MCF 10A (cell line): ENCODE measurements at regions of chr2 and their contacts with region 1.

Region 1: GRCh38 chr2:196592912-196593881 is 46.3 kb upstream of the CCDC150 start:
- DNase-seq: peak; percentile 30
- H3K4me3 Mint-ChIP-seq: peak within 1 kb of the TSS; percentile 78
- H3K27ac Mint-ChIP-seq: no peak within 1 kb of the TSS
- H3K4me1 Mint-ChIP-seq: peaks cover 5% of the 10 kb centered on the region
- H3K27me3 Mint-ChIP-seq: no peaks in the 10 kb centered on the region
- CTCF ChIP-seq: no peak

Region 2: DNA sequence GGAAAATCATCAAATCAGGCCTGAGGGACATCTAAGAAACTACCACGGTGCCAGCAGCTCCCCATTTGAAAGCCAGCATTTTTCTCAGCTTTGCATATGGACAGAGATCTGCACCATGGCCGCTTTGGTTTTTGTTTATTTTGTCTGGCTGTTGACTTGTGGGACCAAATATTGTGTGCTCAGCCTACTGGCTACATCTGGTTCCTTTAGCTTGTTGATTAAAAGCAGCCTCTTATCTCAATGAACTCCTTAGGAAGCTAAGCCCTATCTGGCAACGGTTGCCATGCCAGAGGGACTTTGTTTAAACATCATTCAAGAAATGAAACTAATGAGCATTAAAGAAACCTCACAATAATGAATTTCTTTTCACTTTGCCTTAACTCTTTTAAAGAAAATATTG is 13.9 kb after region 1 on chr2:
- CTCF ChIA-PET with region 1: interaction called, 14 read pairs
- POLR2A ChIA-PET with region 1: no interaction called
- intact Hi-C with region 1: no loop called
- DNase-seq: no peak
- H3K4me3 Mint-ChIP-seq: no peak overlapping the region
- H3K27ac Mint-ChIP-seq: no peak overlapping the region
- H3K4me1 Mint-ChIP-seq: peaks cover 16% of the 10 kb centered on the region
- H3K27me3 Mint-ChIP-seq: no peaks in the 10 kb centered on the region
- CTCF ChIP-seq: no peak

Region 3: GRCh38 chr2:196639180-196640030 is 46.2 kb after region 1 on chr2 and contains the start of gene CCDC150:
- CTCF ChIA-PET with region 1: interaction called, 5 read pairs
- POLR2A ChIA-PET with region 1: interaction called, 4 read pairs
- intact Hi-C with region 1: loop called (anchors 2 kb)
- DNase-seq: peak; percentile 94
- H3K4me3 Mint-ChIP-seq: peak within 1 kb of the TSS; percentile 94
- H3K27ac Mint-ChIP-seq: peak within 1 kb of the TSS; percentile 71
- H3K4me1 Mint-ChIP-seq: peaks cover 16% of the 10 kb centered on the region
- H3K27me3 Mint-ChIP-seq: no peaks in the 10 kb centered on the region
- CTCF ChIP-seq: no peak
- total RNA-seq, gene CCDC150: 5.5 and 8.1 TPM in 2 replicates

Region 4: DNA sequence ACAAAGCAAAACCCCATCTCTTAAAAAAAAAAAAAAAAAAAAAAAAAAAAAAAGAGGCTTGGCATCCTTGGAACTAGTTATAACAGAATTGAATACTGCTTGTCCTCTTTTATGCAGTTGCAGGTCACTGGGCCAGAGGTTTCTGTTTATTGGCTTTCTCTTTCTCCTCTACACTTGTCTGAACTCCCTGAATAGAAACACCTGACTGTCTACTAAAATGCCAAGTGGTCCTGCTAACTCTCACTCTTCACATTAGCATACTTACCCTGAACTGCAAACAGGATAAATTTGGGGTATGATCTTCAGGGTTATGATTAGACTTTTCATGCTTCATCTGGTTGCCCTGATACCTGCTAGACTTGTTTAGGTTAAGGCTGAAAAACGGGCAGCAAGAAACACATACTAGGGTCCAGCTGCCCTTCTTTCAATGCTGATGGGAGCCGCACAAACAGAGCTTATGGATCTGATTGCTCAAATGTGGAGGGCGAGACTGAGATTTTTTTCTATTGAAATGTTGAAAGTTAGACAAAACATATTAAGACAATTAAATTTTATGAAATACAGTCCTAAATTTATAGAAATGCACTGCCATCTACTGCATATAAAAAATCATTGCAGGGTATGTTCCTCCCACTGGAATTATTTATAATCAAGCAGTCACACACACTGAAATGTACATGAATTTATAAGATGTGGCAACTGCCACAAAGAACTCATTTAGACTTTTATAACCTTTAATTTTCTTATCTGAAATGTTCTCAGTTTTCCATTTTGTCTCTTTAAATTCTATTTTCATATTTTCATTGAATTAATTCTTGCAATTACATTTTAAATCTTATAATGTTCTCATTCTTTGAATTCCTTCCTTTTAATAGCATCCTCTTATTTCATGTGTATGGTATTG is 165.5 kb after region 1 on chr2:
- CTCF ChIA-PET with region 1: interaction called, 10 read pairs
- POLR2A ChIA-PET with region 1: no interaction called
- intact Hi-C with region 1: loop called (anchors 2 kb)
- DNase-seq: peak; percentile 2
- H3K4me3 Mint-ChIP-seq: no peak overlapping the region
- H3K27ac Mint-ChIP-seq: no peak overlapping the region
- H3K4me1 Mint-ChIP-seq: no peaks in the 10 kb centered on the region
- H3K27me3 Mint-ChIP-seq: no peaks in the 10 kb centered on the region
- CTCF ChIP-seq: no peak

Region 5: DNA sequence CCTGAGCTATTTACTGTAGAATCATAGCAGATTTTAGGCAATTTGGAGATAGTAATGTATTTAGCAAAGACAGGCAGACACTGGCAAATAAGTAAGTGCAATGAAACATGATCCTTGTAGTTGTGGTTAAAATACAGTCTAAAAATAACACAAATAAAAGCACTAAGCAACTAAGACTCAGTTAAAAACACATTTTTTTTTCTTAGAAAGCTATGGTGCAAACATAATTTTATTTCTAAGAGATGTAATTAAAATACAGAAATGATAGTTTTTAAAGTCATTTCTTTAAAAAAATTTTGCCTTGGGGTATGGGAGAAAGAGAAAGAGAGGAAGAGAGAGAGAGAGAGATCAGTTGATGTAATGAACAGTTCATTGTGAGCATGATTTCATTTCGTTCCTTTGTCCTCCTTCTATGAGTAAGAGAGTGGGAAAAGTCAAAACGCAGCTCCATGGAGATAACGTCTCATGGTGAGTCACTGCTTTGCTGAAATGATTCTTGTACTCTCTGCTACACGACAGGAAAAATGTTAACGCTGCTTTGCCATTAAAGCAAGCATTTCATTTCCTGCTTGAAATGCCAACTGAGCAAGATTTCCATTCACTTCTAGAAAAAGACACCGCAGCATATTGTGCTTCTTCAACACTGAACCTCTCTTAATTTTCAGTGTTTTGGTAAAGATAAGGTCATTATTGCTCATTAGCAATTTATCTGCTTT is 394.6 kb after region 1 on chr2:
- CTCF ChIA-PET with region 1: no interaction called
- POLR2A ChIA-PET with region 1: no interaction called
- intact Hi-C with region 1: no loop called
- DNase-seq: peak; percentile 94
- H3K4me3 Mint-ChIP-seq: peak overlapping the region; percentile 65
- H3K27ac Mint-ChIP-seq: peak overlapping the region; percentile 98
- H3K4me1 Mint-ChIP-seq: peaks cover 18% of the 10 kb centered on the region
- H3K27me3 Mint-ChIP-seq: no peaks in the 10 kb centered on the region
- CTCF ChIP-seq: no peak